HepG2 (cell line): ENCODE measurements at regions of chr5 and their contacts with region 1.

Region 1: GRCh38 chr5:149317281-149318048 is 27.8 kb upstream of the GRPEL2 start:
- DNase-seq: peak; percentile 52
- ATAC-seq: no peak
- H3K4me3 ChIP-seq: peak overlapping the region in 1 of 3 experiments; percentile 5; a peak in 1 of 6 replicates
- H3K27ac ChIP-seq: no peak overlapping the region
- H3K4me1 ChIP-seq: peaks cover 34% of the 10 kb centered on the region
- H3K27me3 ChIP-seq: no peaks in the 10 kb centered on the region
- CTCF ChIP-seq: peak; percentile 84
- EP300 ChIP-seq: no peak
- POLR2A ChIP-seq: no peak
- RAD21 ChIP-seq: peak; percentile 63

Region 2: GRCh38 chr5:149298842-149299404 is 18.5 kb before region 1 on chr5:
- CTCF ChIA-PET with region 1: no interaction called
- POLR2A ChIA-PET with region 1: interaction called, 11 read pairs
- in situ Hi-C with region 1: no loop called
- intact Hi-C with region 1: no loop called
- DNase-seq: no peak
- ATAC-seq: peak; percentile 70
- H3K4me3 ChIP-seq: peak overlapping the region in 1 of 3 experiments; percentile 39; a peak in 1 of 6 replicates
- H3K27ac ChIP-seq: peak overlapping the region; percentile 31
- H3K4me1 ChIP-seq: peaks cover 27% of the 10 kb centered on the region
- H3K27me3 ChIP-seq: no peaks in the 10 kb centered on the region
- CTCF ChIP-seq: no peak
- EP300 ChIP-seq: no peak
- POLR2A ChIP-seq: no peak
- RAD21 ChIP-seq: no peak

Region 3: DNA sequence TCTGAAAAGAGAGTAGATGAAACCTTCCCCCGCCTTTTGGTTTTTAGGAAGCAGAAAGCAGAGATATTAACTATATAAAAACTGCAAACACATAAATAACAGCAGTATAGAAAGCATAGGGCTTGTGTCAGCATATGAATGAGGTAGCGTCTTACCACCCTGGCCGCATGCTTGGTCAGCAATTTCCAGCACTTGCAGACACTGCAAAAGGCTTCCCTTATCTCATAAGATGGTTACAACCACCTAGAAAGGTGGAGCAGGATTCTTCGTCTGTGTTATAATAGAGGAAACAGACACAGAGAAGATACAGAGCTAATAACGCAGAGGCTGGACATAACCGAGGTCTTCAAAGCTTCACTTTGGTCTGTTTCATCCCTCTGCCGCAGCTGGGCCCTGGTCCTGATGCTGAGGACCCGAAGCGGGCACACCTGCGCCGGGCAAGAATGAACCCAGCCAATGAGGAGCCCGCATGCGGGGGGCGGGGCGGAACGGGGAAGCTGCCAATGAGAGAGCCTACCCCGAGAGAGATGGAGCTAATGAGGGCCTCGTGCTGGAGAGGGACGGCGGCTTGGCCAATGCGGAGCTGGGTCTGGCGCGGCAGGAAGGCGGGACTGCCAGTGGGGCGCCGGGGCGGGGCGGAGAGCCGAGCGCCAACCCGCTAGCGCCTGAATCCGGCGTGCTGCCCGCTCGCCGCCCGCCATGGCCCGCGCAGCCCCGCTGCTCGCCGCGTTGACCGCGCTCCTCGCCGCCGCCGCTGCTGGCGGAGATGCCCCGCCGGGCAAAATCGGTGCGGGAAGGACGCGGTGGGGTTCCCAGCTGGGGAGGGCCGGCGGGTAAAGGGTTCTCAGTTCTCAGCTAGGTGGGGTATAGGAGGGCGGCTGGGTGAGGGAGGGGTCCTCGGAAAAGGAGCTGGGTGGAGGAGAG is 40.2 kb after region 1 on chr5 and contains the start of gene PCYOX1L:
- CTCF ChIA-PET with region 1: no interaction called
- POLR2A ChIA-PET with region 1: interaction called, 13 read pairs
- in situ Hi-C with region 1: no loop called
- intact Hi-C with region 1: no loop called
- DNase-seq: peak; percentile 92
- ATAC-seq: peak; percentile 100
- H3K4me3 ChIP-seq: peak within 1 kb of the TSS; percentile 60 to 79 (median 63)
- H3K27ac ChIP-seq: no peak within 1 kb of the TSS
- H3K4me1 ChIP-seq: peaks cover 21% of the 10 kb centered on the region
- H3K27me3 ChIP-seq: no peaks in the 10 kb centered on the region
- CTCF ChIP-seq: no peak; the same call in 1 of the 2 replicates
- EP300 ChIP-seq: no peak
- POLR2A ChIP-seq: peak in 1 of 2 experiments; percentile 80; a peak in 2 of 4 replicates
- RAD21 ChIP-seq: no peak
- total RNA-seq, gene PCYOX1L: 0.24 and 1.00 TPM in 2 replicates

Region 4: DNA sequence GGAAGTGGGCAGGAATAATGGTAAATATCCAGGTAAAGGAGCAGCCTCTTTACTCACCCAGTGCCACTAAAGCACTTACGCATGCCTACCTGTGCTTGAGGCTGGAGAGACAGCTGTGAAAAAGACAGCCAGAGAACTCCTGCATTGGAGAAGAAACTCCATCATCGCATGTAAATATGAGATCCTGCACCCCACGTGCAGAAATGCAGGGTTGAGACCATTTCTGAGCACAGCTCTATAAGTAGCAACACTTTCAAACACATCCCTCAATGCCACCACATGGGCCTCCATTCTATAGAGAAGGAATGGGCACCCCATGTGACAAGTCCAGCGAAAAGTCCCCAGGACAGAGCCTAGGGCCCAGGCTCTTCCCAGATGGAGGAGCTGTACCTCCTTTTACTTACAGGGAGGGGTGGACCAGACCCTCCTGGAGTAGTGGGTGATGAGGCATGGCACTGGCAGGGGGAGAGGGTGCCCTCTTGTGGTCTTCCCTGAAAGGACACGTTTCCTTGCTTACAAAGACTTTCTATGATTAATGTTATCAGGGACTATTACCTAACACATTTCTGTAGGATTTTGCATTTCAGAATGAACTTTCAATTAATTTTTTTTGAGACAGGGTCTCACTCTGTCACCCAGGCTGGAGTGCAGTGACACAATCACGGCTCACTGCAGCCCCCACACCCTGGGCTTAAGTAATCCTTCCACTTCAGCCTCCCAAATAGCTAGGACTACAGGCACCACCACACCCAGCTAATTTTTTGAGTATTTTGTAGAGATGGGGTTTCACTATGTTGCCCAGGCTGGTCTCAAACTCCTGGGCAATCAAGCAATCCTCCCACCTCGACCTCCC is 116.9 kb after region 1 on chr5:
- CTCF ChIA-PET with region 1: interaction called, 5 read pairs
- POLR2A ChIA-PET with region 1: interaction called, 5 read pairs
- in situ Hi-C with region 1: loop called (anchors 5 kb)
- intact Hi-C with region 1: loop called (anchors 1 kb)
- DNase-seq: no peak
- ATAC-seq: peak; percentile 32
- H3K4me3 ChIP-seq: no peak overlapping the region
- H3K27ac ChIP-seq: no peak overlapping the region
- H3K4me1 ChIP-seq: peaks cover 77% of the 10 kb centered on the region
- H3K27me3 ChIP-seq: peaks cover 0 to 4% of the 10 kb centered on the region in 2 experiments; a peak in 1 of 5 replicates
- CTCF ChIP-seq: peak; percentile 86
- EP300 ChIP-seq: no peak
- POLR2A ChIP-seq: no peak
- RAD21 ChIP-seq: peak; percentile 53; the same call in 1 of the 2 replicates

Region 5: DNA sequence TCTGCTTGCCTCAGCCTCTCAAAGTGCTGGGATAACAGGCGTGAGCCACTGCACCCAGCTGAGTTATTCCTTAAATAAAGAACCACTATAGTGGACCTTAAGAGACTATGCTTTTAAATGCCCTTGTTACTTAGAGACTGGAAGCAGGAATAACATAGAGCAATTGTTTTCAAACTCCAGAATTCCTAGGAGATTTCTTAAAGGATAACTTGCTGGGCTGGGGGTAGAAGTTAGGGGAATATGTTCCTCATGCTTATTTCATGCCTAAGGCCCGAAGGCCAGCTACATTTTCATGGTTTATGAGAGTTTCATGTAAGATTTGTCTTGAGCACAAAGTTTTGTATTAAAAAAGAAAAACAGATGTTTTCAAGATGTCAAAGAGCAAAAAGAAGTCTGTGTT is 185.5 kb after region 1 on chr5:
- CTCF ChIA-PET with region 1: no interaction called
- POLR2A ChIA-PET with region 1: no interaction called
- in situ Hi-C with region 1: no loop called
- intact Hi-C with region 1: no loop called
- DNase-seq: no peak
- ATAC-seq: no peak
- H3K4me3 ChIP-seq: no peak overlapping the region
- H3K27ac ChIP-seq: no peak overlapping the region
- H3K4me1 ChIP-seq: no peaks in the 10 kb centered on the region
- H3K27me3 ChIP-seq: no peaks in the 10 kb centered on the region
- CTCF ChIP-seq: no peak
- EP300 ChIP-seq: no peak
- POLR2A ChIP-seq: no peak
- RAD21 ChIP-seq: no peak

Region 6: GRCh38 chr5:149561848-149562247 is 244.4 kb after region 1 on chr5:
- CTCF ChIA-PET with region 1: interaction called, 4 read pairs
- POLR2A ChIA-PET with region 1: no interaction called
- in situ Hi-C with region 1: no loop called
- intact Hi-C with region 1: loop called (anchors 2 kb)
- DNase-seq: peak; percentile 36
- ATAC-seq: no peak
- H3K4me3 ChIP-seq: no peak overlapping the region
- H3K27ac ChIP-seq: no peak overlapping the region
- H3K4me1 ChIP-seq: peaks cover 16% of the 10 kb centered on the region
- H3K27me3 ChIP-seq: no peaks in the 10 kb centered on the region
- CTCF ChIP-seq: no peak
- EP300 ChIP-seq: no peak
- POLR2A ChIP-seq: no peak
- RAD21 ChIP-seq: no peak